ENCODE measurements at regions of chr17 and their contacts with region 1.

Region 1: GRCh38 chr17:28967221-28968140 is 16.2 kb upstream of the PHF12 start:
- DNase-seq: peak; percentile 50
- ATAC-seq: peak; percentile 21
- H3K4me3 ChIP-seq: no peak overlapping the region
- H3K4me3 Mint-ChIP-seq: no peak overlapping the region
- H3K27ac ChIP-seq: peak overlapping the region in 1 of 2 donors; percentile 40
- H3K27ac Mint-ChIP-seq: peak overlapping the region; percentile 66
- H3K4me1 ChIP-seq: peaks cover 4 to 17% of the 10 kb centered on the region in 2 donors
- H3K4me1 Mint-ChIP-seq: peaks cover 9% of the 10 kb centered on the region
- H3K27me3 ChIP-seq: peaks cover 0 to 15% (median 2%) of the 10 kb centered on the region in 4 experiments
- H3K27me3 Mint-ChIP-seq: peaks cover 13% of the 10 kb centered on the region
- CTCF ChIP-seq: no peak

Region 2: DNA sequence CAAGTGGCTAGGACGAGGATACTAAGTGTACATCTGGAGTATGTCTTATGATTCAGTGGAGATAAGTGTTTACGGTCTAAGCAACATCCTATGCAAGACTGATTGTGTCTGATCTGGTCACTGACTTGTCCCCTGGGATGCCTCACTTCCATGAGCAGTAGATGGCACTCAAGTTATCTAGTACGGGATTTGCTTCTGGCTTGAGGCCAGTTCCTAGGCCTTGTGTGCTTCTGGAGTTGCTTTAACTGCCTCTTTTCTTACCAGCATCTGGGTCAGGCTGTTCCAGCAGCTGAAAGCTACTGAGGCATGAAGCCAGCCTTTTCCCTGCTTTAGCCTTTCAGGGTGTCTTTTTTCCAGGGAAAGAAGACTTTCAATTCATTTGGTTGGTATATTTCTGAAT is 282.5 kb before region 1 on chr17:
- CTCF ChIA-PET with region 1: no interaction called
- POLR2A ChIA-PET with region 1: no interaction called
- intact Hi-C with region 1: no loop called
- DNase-seq: no peak
- ATAC-seq: no peak
- H3K4me3 ChIP-seq: no peak overlapping the region
- H3K4me3 Mint-ChIP-seq: no peak overlapping the region
- H3K27ac ChIP-seq: no peak overlapping the region
- H3K27ac Mint-ChIP-seq: no peak overlapping the region
- H3K4me1 ChIP-seq: no peaks in the 10 kb centered on the region
- H3K4me1 Mint-ChIP-seq: no peaks in the 10 kb centered on the region
- H3K27me3 ChIP-seq: no peaks in the 10 kb centered on the region
- H3K27me3 Mint-ChIP-seq: no peaks in the 10 kb centered on the region
- CTCF ChIP-seq: no peak

Region 3: DNA sequence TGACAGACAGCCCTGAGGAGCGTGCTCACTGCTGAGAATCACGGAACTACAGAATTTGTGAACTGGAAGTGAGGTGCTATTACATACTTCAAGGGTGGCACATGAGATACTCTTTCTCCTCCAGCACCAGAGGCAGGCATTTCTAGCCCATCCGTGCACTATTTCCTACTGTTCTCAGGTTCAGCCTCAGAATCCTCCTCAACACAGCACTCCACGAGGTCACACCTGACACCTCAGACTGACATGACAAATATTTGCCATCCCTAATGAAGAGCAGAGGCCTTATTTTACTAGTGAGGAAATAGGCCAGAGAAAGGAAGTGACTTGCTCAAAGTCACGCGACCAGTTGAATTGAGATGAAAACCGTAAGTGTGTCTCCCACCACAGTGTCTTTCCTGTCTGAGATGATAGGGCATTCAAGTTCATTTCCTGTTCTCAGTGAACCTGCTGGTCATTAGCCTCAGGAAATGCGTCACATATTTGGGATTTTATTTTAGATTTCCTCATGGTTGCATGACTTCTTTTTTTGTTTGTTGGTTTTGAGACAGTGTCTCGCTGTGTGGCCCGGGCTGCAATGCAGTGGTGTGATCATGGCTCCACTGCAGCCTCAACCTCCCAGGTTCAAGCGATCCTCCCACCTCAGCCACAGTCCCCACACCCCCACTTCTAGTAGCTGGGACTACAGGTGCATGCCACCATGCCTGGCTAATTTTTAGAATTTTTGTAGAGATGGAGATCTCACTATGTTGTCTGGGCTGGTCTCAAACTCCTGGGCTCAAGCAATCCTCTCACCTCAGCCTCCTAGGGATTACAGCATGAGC is 14.9 kb after region 1 on chr17:
- CTCF ChIA-PET with region 1: interaction called, 13 read pairs
- POLR2A ChIA-PET with region 1: interaction called, 4 read pairs
- intact Hi-C with region 1: no loop called
- DNase-seq: peak; percentile 88
- ATAC-seq: peak; percentile 81
- H3K4me3 ChIP-seq: no peak overlapping the region
- H3K4me3 Mint-ChIP-seq: peak overlapping the region; percentile 67
- H3K27ac ChIP-seq: peak overlapping the region; percentile 58 to 79
- H3K27ac Mint-ChIP-seq: peak overlapping the region; percentile 91
- H3K4me1 ChIP-seq: peaks cover 16 to 21% of the 10 kb centered on the region in 2 donors
- H3K4me1 Mint-ChIP-seq: peaks cover 18% of the 10 kb centered on the region
- H3K27me3 ChIP-seq: no peaks in the 10 kb centered on the region
- H3K27me3 Mint-ChIP-seq: peaks cover 9% of the 10 kb centered on the region
- CTCF ChIP-seq: no peak

Region 4: GRCh38 chr17:29039764-29040598 is 72.5 kb after region 1 on chr17:
- CTCF ChIA-PET with region 1: interaction called, 6 read pairs
- POLR2A ChIA-PET with region 1: no interaction called
- intact Hi-C with region 1: loop called (anchors 10 kb)
- DNase-seq: no peak
- ATAC-seq: no peak
- H3K4me3 ChIP-seq: no peak overlapping the region
- H3K4me3 Mint-ChIP-seq: no peak overlapping the region
- H3K27ac ChIP-seq: no peak overlapping the region
- H3K27ac Mint-ChIP-seq: no peak overlapping the region
- H3K4me1 ChIP-seq: peaks cover 14 to 15% of the 10 kb centered on the region in 2 donors
- H3K4me1 Mint-ChIP-seq: peaks cover 16% of the 10 kb centered on the region
- H3K27me3 ChIP-seq: peaks cover 0 to 21% (median 6%) of the 10 kb centered on the region in 4 experiments
- H3K27me3 Mint-ChIP-seq: peaks cover 17% of the 10 kb centered on the region
- CTCF ChIP-seq: no peak

Region 5: GRCh38 chr17:29111816-29112499 is 144.5 kb after region 1 on chr17:
- CTCF ChIA-PET with region 1: interaction called, 359 read pairs
- POLR2A ChIA-PET with region 1: interaction called, 4 read pairs
- intact Hi-C with region 1: loop called (anchors 1 kb)
- DNase-seq: peak; percentile 66
- ATAC-seq: peak; percentile 79
- H3K4me3 ChIP-seq: no peak overlapping the region
- H3K4me3 Mint-ChIP-seq: no peak overlapping the region
- H3K27ac ChIP-seq: no peak overlapping the region
- H3K27ac Mint-ChIP-seq: no peak overlapping the region
- H3K4me1 ChIP-seq: no peaks in the 10 kb centered on the region
- H3K4me1 Mint-ChIP-seq: peaks cover 5% of the 10 kb centered on the region
- H3K27me3 ChIP-seq: no peaks in the 10 kb centered on the region
- H3K27me3 Mint-ChIP-seq: no peaks in the 10 kb centered on the region
- CTCF ChIP-seq: peak; percentile 88

Region 6: GRCh38 chr17:29133146-29133713 is 165.7 kb after region 1 on chr17:
- CTCF ChIA-PET with region 1: no interaction called
- POLR2A ChIA-PET with region 1: no interaction called
- intact Hi-C with region 1: no loop called
- DNase-seq: no peak
- ATAC-seq: no peak
- H3K4me3 ChIP-seq: no peak overlapping the region
- H3K4me3 Mint-ChIP-seq: no peak overlapping the region
- H3K27ac ChIP-seq: no peak overlapping the region
- H3K27ac Mint-ChIP-seq: no peak overlapping the region
- H3K4me1 ChIP-seq: peaks cover 11 to 14% of the 10 kb centered on the region in 2 donors
- H3K4me1 Mint-ChIP-seq: peaks cover 35% of the 10 kb centered on the region
- H3K27me3 ChIP-seq: no peaks in the 10 kb centered on the region
- H3K27me3 Mint-ChIP-seq: no peaks in the 10 kb centered on the region
- CTCF ChIP-seq: no peak

Region 7: DNA sequence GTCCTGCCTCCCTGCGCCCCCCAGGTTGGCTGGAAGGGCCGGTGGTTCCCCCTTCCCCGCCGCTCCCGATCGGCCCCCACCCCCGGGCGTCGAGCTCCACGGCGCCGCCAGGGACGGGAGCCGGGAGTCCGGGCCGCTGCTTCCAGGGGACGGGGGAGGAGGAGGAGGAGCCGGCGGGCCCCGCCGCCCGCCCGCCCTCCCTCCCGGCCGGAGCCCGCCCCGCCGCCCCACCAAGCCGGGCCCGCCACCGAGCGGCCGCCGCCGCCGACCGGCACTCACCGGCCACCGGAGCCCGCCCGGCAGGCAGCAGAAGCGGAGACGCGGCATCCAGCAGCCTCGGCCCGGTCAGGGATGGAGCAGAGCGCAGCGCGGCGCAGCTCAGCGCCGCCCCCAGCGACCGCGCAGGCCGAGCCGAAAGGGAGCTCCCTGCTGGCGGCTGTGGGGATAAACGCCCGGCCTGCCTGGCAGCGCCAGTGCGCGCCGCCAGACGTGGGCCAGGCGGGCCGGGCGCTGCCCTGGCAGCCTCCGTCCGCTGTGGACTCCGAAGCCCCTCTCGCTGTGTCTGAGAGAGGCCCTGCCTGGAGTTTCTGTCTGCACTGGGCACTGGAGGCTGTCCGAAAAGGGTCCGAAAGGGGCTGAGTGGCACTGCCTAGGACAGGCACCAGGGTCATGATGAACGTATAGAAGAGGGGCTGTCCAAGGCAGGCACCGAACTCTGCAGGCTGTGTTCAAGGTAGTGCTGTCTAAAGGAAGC is 212.7 kb after region 1 on chr17 and contains the start of gene MYO18A:
- CTCF ChIA-PET with region 1: interaction called, 12 read pairs
- POLR2A ChIA-PET with region 1: no interaction called
- intact Hi-C with region 1: no loop called
- DNase-seq: peak; percentile 87
- ATAC-seq: peak; percentile 97
- H3K4me3 ChIP-seq: peak within 1 kb of the TSS in 3 of 5 experiments; percentile 33 to 46 (median 44)
- H3K4me3 Mint-ChIP-seq: peak within 1 kb of the TSS; percentile 69
- H3K27ac ChIP-seq: no peak within 1 kb of the TSS
- H3K27ac Mint-ChIP-seq: no peak within 1 kb of the TSS
- H3K4me1 ChIP-seq: peaks cover 9 to 28% of the 10 kb centered on the region in 2 donors
- H3K4me1 Mint-ChIP-seq: peaks cover 16% of the 10 kb centered on the region
- H3K27me3 ChIP-seq: peaks cover 0 to 2% (median 0%) of the 10 kb centered on the region in 4 experiments
- H3K27me3 Mint-ChIP-seq: peaks cover 7% of the 10 kb centered on the region
- CTCF ChIP-seq: peak; percentile 81
- total RNA-seq, gene MYO18A: 155 and 169 TPM in 2 replicates